KBM-7 (cell line): ENCODE measurements at regions of chr10 and their contacts with region 1.

Region 1: GRCh38 chr10:80205478-80206276 is at the start of gene ANXA11:
- DNase-seq: peak; percentile 90

Region 2: GRCh38 chr10:80158598-80159127 is 47.0 kb before region 1 on chr10:
- in situ Hi-C with region 1: loop called (anchors 10 kb)
- DNase-seq: peak; percentile 95